CD8-positive, alpha-beta T cell (primary cell): ENCODE measurements at regions of chr12 and their contacts with region 1.

Region 1: DNA sequence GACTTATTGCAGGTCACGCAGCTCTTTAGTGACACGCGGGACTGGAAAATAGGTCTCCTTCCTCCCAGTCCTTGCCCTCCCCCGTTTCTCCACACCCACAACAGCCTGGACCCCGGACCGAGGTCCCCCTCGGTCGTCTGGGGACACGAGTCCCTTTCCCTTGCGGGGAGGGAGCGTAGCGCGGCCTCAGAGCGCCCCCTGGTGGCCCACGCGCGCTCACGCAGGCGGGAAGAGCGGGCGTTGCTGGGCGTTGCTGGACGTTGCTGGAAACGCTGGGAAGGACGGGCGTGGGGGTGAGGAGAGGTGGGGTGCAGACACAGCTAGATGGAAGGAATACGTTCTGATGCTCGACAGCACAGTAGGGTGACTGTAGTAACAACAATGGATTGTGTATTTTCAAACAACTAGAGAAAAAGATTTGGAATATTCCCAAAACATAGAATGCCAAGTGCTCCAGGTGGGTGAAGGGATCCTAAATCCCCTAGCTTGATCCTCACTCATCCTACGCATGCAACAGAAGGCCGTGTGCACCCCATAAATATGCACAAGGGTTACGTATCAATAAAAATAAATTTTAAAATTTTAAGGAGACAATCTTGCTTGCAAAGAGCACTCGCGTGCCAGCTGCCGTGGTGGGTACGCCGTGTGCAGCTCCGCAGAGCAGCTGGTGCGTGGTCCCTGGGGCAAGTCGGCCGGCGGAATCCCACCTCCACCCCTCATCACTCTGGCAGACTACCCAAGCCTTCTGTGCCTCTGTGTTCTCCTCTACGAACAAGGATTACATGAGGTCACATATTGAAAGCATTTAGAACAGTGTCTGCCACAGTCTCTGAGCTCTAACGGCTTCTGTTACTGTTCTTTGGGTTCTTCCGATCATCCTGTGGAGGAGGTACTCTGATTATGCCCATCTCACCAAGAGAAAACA is 87.4 kb downstream of the B4GALNT3 start:
- DNase-seq: peak; percentile 39 to 84 (median 67)
- ATAC-seq: peak; percentile 78
- H3K4me3 ChIP-seq: no peak overlapping the region
- H3K4me3 Mint-ChIP-seq: no peak overlapping the region
- H3K27ac ChIP-seq: no peak overlapping the region
- H3K27ac Mint-ChIP-seq: no peak overlapping the region
- H3K4me1 ChIP-seq: peaks cover 19% of the 10 kb centered on the region
- H3K4me1 Mint-ChIP-seq: peaks cover 37% of the 10 kb centered on the region
- H3K27me3 ChIP-seq: no peaks in the 10 kb centered on the region
- H3K27me3 Mint-ChIP-seq: peaks cover 15% of the 10 kb centered on the region
- CTCF ChIP-seq: peak; percentile 99

Region 2: DNA sequence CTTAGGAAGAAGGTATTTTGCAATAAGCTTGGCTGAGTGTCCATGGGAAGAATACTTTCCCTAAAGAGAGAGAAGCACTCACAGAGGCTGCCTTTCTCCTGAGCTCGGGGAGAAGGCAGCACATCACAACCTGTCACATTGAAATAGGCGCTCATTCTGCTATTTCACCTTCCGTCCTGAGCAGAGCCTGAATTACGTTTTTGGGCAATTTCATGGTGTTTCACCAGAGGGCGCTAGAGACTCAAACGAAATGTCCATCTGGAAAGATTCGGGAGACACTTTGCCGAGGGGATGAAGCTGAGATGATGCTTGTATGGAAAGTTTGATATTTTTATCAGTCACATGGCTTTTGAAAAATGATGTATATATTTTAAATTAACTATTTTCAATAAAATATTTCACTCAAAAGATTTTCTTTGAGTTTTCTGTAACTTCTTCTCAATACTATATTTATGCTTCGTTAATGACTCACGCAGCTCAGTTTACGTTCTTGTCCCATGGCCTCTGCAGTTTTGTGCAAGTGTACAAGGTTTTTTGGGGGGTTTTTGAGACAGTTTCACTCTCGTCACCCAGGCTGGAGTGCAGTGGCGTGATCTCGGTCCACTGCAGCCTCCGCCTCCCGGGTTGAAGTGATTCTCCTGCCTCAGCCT is 104.8 kb before region 1 on chr12:
- CTCF ChIA-PET with region 1: interaction called, 86 read pairs
- POLR2A ChIA-PET with region 1: interaction called, 3 read pairs
- intact Hi-C with region 1: loop called (anchors 1 kb)
- DNase-seq: peak in 6 of 9 experiments; percentile 29 to 64 (median 58)
- ATAC-seq: no peak
- H3K4me3 ChIP-seq: no peak overlapping the region
- H3K4me3 Mint-ChIP-seq: no peak overlapping the region
- H3K27ac ChIP-seq: no peak overlapping the region
- H3K27ac Mint-ChIP-seq: no peak overlapping the region
- H3K4me1 ChIP-seq: no peaks in the 10 kb centered on the region
- H3K4me1 Mint-ChIP-seq: no peaks in the 10 kb centered on the region
- H3K27me3 ChIP-seq: no peaks in the 10 kb centered on the region
- H3K27me3 Mint-ChIP-seq: peaks cover 2% of the 10 kb centered on the region
- CTCF ChIP-seq: peak; percentile 74

Region 3: GRCh38 chr12:452667-453210 is 94.4 kb before region 1 on chr12:
- CTCF ChIA-PET with region 1: interaction called, 93 read pairs
- POLR2A ChIA-PET with region 1: interaction called, 3 read pairs
- intact Hi-C with region 1: loop called (anchors 1 to 2 kb)
- DNase-seq: peak in 7 of 9 experiments; percentile 17 to 72 (median 59)
- ATAC-seq: no peak
- H3K4me3 ChIP-seq: no peak overlapping the region
- H3K4me3 Mint-ChIP-seq: no peak overlapping the region
- H3K27ac ChIP-seq: no peak overlapping the region
- H3K27ac Mint-ChIP-seq: no peak overlapping the region
- H3K4me1 ChIP-seq: no peaks in the 10 kb centered on the region
- H3K4me1 Mint-ChIP-seq: peaks cover 2% of the 10 kb centered on the region
- H3K27me3 ChIP-seq: no peaks in the 10 kb centered on the region
- H3K27me3 Mint-ChIP-seq: peaks cover 15% of the 10 kb centered on the region
- CTCF ChIP-seq: no peak

Region 4: GRCh38 chr12:459430-460258 is 87.5 kb before region 1 on chr12 and contains the start of gene B4GALNT3:
- CTCF ChIA-PET with region 1: interaction called, 93 read pairs
- POLR2A ChIA-PET with region 1: interaction called, 3 read pairs
- intact Hi-C with region 1: loop called (anchors 1 to 2 kb)
- DNase-seq: peak in 7 of 9 experiments; percentile 14 to 65 (median 48)
- ATAC-seq: peak; percentile 62
- H3K4me3 ChIP-seq: peak within 1 kb of the TSS; percentile 51 to 54
- H3K4me3 Mint-ChIP-seq: peak within 1 kb of the TSS; percentile 89
- H3K27ac ChIP-seq: no peak within 1 kb of the TSS
- H3K27ac Mint-ChIP-seq: peak within 1 kb of the TSS; percentile 25
- H3K4me1 ChIP-seq: peaks cover 10% of the 10 kb centered on the region
- H3K4me1 Mint-ChIP-seq: peaks cover 26% of the 10 kb centered on the region
- H3K27me3 ChIP-seq: peaks cover 0 to 3% of the 10 kb centered on the region in 2 experiments
- H3K27me3 Mint-ChIP-seq: peaks cover 29% of the 10 kb centered on the region
- CTCF ChIP-seq: no peak
- total RNA-seq, gene B4GALNT3: 1.1 to 1.2 TPM

Region 5: DNA sequence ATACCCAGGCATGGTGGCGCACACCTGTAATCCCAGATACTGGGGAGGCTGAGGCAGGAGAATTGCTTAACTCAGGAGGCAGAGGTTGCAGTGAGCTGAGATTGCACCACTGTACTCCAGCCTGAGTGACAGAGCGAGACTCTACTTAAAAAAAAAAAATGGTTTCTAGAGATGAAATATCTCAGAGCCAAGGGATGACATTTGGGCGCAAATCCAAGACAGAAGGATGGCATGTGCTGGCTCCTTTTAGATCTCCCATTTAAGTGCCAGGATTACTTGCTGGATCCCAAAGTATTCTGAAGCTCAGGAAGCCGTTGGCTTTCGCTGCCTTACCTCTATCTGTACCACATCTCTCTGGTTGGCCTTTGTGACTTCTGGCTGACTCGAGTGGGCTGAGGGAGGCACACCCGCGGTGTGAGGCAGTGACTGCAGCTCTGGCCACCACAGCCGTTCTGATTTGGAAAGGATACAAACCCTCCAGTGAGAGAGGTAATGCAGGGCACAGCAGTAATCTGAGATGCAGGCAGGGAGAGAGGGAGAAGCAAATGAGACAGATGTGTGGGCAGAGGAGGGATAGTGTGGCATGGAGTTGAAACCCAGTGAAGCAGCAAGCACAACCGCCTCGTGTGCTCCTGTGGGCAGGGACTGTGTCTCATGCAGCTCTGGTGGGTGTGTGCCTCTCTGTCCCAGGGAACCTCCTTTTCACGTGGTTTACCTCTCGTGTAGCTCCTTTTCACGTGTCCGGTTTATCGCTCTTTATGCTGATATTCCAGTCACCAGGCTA is 82.5 kb before region 1 on chr12:
- CTCF ChIA-PET with region 1: interaction called, 93 read pairs
- POLR2A ChIA-PET with region 1: interaction called, 3 read pairs
- intact Hi-C with region 1: no loop called
- DNase-seq: no peak
- ATAC-seq: no peak
- H3K4me3 ChIP-seq: no peak overlapping the region
- H3K4me3 Mint-ChIP-seq: no peak overlapping the region
- H3K27ac ChIP-seq: no peak overlapping the region
- H3K27ac Mint-ChIP-seq: no peak overlapping the region
- H3K4me1 ChIP-seq: no peaks in the 10 kb centered on the region
- H3K4me1 Mint-ChIP-seq: peaks cover 18% of the 10 kb centered on the region
- H3K27me3 ChIP-seq: no peaks in the 10 kb centered on the region
- H3K27me3 Mint-ChIP-seq: peaks cover 15% of the 10 kb centered on the region
- CTCF ChIP-seq: no peak

Region 6: DNA sequence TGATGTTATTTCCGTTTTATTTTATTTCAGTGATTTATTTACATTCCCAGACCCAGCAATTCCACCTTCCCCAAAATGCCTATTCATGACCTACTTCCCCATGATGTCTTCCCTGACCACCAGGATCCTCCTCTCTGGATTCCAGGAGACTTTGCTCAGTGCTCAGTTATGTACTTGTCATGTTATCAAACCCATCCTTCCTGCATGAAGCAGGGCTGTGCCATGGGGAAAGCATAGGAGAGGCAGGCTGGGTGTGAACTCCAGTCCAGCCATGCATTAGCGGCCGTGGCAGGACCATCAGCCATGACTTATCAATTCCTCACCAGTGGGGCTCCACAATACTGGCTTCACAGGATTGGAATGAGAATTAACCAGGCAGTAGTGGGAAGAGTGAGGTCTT is 29.6 kb before region 1 on chr12:
- CTCF ChIA-PET with region 1: interaction called, 10 read pairs
- POLR2A ChIA-PET with region 1: no interaction called
- intact Hi-C with region 1: no loop called
- DNase-seq: no peak
- ATAC-seq: no peak
- H3K4me3 ChIP-seq: no peak overlapping the region
- H3K4me3 Mint-ChIP-seq: no peak overlapping the region
- H3K27ac ChIP-seq: no peak overlapping the region
- H3K27ac Mint-ChIP-seq: no peak overlapping the region
- H3K4me1 ChIP-seq: no peaks in the 10 kb centered on the region
- H3K4me1 Mint-ChIP-seq: no peaks in the 10 kb centered on the region
- H3K27me3 ChIP-seq: no peaks in the 10 kb centered on the region
- H3K27me3 Mint-ChIP-seq: peaks cover 34% of the 10 kb centered on the region
- CTCF ChIP-seq: no peak

Region 7: DNA sequence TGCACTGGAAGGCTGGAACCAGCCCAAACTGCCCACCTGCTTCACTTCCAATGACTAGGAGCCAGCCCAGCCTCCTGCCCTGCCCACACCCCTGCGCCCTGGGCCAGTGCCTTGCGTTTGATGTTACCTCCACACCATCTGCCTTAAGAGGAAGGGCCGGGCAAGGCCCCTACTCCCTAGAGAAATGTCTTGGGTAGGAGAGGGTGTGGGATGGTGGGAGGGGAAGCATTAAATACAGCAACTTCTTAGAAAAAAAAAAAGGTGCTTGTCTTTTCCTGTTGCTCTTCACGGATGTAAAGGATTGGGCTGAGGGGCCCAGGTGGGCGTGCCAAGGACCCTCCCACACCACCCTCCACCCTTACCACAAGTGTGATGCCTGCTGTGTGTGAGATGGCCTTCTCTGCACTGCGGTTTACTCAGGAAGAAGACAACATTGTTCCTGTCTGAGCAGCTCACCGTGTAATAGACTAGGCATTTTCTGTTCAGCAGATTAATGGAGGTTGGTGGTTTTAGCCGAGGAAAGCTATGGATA is 16.1 kb after region 1 on chr12:
- CTCF ChIA-PET with region 1: interaction called, 32 read pairs
- POLR2A ChIA-PET with region 1: interaction called, 4 read pairs
- intact Hi-C with region 1: no loop called
- DNase-seq: peak; percentile 19 to 88 (median 70)
- ATAC-seq: peak; percentile 94
- H3K4me3 ChIP-seq: peak overlapping the region; percentile 26 to 47
- H3K4me3 Mint-ChIP-seq: peak overlapping the region; percentile 83
- H3K27ac ChIP-seq: peak overlapping the region; percentile 68 to 87
- H3K27ac Mint-ChIP-seq: peak overlapping the region; percentile 97
- H3K4me1 ChIP-seq: peaks cover 66% of the 10 kb centered on the region
- H3K4me1 Mint-ChIP-seq: peaks cover 86% of the 10 kb centered on the region
- H3K27me3 ChIP-seq: no peaks in the 10 kb centered on the region
- H3K27me3 Mint-ChIP-seq: no peaks in the 10 kb centered on the region
- CTCF ChIP-seq: no peak